Activated CD4-positive, alpha-beta memory T cell treated with anti-CD3 and anti-CD28 coated beads, Interleukin-2, amount 10 ng/mL, durations not matched to agents 7 days and 5 days (primary cell): ENCODE measurements at regions of chr1 and their contacts with region 1.

Region 1: DNA sequence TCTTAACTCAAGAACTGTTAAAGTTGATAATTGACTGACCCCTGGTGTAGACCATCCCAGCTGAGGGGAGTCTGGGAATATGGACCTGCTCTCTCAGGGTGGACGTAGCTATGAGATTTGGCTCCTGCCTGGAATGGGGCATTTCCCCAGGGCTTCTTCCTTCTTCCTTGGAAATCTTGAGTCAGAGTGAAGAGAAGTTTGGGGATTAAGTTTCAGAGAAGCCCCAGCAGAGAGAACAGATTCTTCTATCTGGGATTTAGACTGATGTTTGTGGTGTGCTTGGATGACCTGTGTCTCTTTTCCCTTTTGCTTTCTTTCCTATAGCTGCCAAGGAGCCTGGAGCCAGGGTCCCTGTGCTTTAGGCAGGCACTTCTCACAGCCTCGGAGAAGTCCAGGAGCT is 13.2 kb downstream of the AKR1A1 start:
- DNase-seq: no peak
- H3K4me3 Mint-ChIP-seq: no peak overlapping the region
- H3K27ac Mint-ChIP-seq: no peak overlapping the region
- H3K4me1 Mint-ChIP-seq: peaks cover 5% of the 10 kb centered on the region
- H3K27me3 Mint-ChIP-seq: no peaks in the 10 kb centered on the region

Region 2: DNA sequence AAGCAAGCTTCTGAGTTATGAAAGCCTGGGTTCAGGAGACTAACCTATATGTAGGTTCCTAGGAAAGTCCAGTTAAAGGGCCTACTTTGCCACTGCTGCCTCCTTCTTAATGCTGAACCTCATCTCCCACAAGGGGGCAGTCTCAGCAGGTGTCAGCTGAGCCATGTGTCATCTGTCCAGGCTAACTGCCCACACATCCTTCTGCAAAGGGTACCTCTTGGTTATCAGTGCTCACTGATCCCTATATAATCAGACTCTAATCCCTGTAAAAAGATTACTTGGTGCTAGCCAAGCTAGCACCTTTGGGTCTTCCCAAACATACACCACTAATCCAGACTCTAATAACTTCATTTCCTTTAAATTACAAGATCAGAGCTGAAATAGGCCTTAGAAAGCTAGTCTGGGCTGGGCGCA is 51.2 kb before region 1 on chr1:
- CTCF ChIA-PET with region 1: interaction called, 120 read pairs
- POLR2A ChIA-PET with region 1: interaction called, 28 read pairs
- DNase-seq: peak; percentile 68
- H3K4me3 Mint-ChIP-seq: no peak overlapping the region
- H3K27ac Mint-ChIP-seq: peak overlapping the region; percentile 47
- H3K4me1 Mint-ChIP-seq: peaks cover 19% of the 10 kb centered on the region
- H3K27me3 Mint-ChIP-seq: no peaks in the 10 kb centered on the region